AG04450 (cell line): ENCODE measurements at regions of chr14 and their contacts with region 1.

Region 1: DNA sequence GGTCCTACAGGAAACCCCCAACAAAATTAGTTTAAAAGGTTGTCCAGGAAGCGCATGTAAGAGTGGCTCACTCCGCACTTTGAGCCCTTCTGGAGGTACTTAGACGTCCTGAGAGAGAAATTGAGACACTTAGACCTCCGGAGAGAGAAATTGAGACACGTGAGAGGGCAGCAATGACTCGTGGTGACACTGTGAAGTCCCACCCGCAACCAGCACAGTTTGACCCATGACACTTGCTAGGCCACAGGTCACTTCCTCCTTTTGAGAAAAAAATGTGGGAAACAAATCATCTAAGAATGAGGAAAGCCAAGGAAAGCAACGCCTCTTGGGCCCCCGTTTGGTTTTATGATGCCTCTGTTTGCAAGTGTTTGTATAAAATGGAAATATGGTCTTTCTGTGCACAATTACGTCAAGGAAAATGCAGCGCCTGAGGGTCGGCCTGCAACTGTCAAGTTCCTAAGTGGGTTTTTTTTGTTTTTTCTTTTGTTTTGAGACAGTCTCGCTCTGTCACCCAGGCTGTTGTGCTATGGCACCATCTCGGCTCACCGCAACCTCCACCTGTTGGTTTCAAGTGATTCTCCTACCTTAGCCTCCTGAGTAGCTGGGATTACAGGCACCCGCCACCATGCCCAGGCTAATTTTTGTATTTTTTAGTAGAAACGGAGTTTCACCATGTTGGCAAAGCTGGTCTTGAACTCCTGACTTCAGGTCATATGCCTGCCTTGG is 13.6 kb upstream of the CDCA4 start:
- DNase-seq: no peak
- H3K4me3 ChIP-seq: no peak overlapping the region
- H3K27ac ChIP-seq: no peak overlapping the region
- H3K27me3 ChIP-seq: peaks cover 9% of the 10 kb centered on the region
- CTCF ChIP-seq: no peak

Region 2: GRCh38 chr14:104749111-104749649 is 285.3 kb before region 1 on chr14:
- CTCF ChIA-PET with region 1: no interaction called
- POLR2A ChIA-PET with region 1: no interaction called
- DNase-seq: no peak
- H3K4me3 ChIP-seq: no peak overlapping the region
- H3K27ac ChIP-seq: peak overlapping the region; percentile 42
- H3K27me3 ChIP-seq: no peaks in the 10 kb centered on the region
- CTCF ChIP-seq: no peak

Region 3: DNA sequence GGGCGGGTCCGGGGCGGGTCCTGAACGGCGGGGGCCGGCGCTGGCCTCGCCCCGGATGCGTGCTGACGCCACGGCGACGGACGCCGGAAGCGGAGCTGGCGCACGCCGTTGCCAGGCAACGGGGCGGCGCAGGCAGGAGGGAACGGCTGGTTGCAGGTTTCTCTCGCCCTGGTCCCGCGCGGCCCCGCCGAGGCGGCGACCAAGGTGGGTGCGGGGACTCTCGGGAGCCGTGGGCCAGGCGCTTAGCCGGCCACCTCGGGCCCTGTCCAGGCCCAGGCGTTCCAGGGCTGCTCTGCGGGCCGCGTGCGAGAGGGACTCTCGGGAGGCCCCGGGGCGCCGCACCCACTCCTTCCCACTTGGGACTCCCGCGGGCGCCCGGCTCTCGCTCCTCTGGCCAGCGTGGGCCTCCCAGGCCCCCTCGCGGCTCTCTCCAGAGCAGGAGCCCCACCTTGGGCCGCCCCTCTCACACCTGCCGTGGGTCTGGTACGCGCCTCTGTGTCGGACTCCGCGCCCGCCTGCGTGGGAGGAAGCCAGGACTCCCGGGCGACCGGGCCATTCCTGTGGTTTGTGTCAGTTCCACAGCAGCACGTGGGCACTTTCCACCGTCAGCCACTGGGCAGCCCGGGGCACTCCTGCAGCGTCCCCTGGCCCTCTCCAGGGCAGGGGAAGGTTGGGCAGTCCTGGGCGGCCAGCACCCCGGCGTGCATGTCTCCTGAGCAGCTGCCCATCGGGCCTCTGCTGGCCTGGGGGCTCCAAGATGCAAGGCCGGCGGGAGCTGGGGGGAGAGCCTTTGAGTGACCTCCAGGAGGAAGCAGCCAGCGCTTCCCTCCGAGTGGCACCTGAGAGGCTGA is 48.6 kb before region 1 on chr14 and contains the start of gene CLBA1:
- CTCF ChIA-PET with region 1: no interaction called
- POLR2A ChIA-PET with region 1: no interaction called
- DNase-seq: peak; percentile 70
- H3K4me3 ChIP-seq: peak within 1 kb of the TSS; percentile 69
- H3K27ac ChIP-seq: no peak within 1 kb of the TSS
- H3K27me3 ChIP-seq: peaks cover 2% of the 10 kb centered on the region
- CTCF ChIP-seq: no peak
- polyA plus RNA-seq, gene CLBA1: 4.6 and 4.9 TPM in 2 replicates

Region 4: GRCh38 chr14:105020815-105021655 is 13.4 kb before region 1 on chr14 and contains the start of gene CDCA4:
- CTCF ChIA-PET with region 1: no interaction called
- POLR2A ChIA-PET with region 1: interaction called, 11 read pairs
- DNase-seq: peak; percentile 81
- H3K4me3 ChIP-seq: peak within 1 kb of the TSS; percentile 82
- H3K27ac ChIP-seq: peak within 1 kb of the TSS; percentile 82
- H3K27me3 ChIP-seq: no peaks in the 10 kb centered on the region
- CTCF ChIP-seq: no peak
- polyA plus RNA-seq, gene CDCA4: 6.8 and 7.8 TPM in 2 replicates